ENCODE measurements at regions of chr12 and their contacts with region 1.

Region 1: DNA sequence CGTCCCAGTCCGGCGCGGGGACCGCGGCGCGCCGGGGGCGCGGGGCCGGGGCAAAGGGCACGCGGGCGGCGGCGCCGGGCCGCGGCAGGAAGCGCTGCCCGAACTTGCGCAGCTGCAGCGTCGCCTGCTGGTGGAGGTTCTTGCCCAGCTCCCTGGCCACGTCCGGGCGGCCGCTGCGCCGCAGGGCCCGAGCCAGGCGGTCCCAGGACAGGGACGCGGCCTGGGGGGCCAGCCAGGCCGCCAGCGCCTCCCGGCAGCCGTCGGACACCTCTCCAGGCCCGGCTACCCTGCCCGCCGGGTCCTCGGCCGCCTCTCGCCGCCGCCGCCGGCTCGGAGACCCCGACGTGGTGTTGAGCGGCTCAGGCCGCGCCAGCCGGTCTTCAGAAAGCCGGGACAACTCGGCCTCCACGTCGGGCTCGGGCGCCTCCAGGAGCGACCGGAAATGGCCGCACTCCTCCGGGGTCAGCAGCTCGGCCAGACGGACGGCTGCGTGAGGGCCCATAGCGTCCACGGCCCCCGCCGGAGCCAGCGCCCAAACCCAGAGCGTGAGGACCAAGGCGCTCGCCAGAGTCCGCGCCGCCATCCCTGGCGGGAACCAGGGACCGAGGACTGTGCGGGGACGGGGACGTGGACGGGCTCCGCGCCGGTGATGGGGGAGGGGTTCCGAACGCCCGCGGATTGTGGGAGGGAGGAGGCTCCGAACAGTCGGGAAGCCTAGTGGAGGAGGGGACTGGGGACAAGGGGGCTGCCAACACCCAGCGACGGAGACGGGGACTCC is 34.0 kb downstream of the FIGNL2 start:
- DNase-seq: peak; percentile 85
- ATAC-seq: peak; percentile 90
- H3K4me3 Mint-ChIP-seq: peak overlapping the region; percentile 54
- H3K27ac Mint-ChIP-seq: peak overlapping the region; percentile 70
- H3K4me1 Mint-ChIP-seq: peaks cover 9% of the 10 kb centered on the region
- H3K27me3 Mint-ChIP-seq: no peaks in the 10 kb centered on the region

Region 2: GRCh38 chr12:51590347-51591019 is 224.0 kb before region 1 on chr12:
- CTCF ChIA-PET with region 1: no interaction called
- POLR2A ChIA-PET with region 1: no interaction called
- intact Hi-C with region 1: loop called in 1 of 2 experiments (anchors 1 kb)
- DNase-seq: peak; percentile 88
- ATAC-seq: peak; percentile 89
- H3K4me3 Mint-ChIP-seq: peak overlapping the region; percentile 76
- H3K27ac Mint-ChIP-seq: peak overlapping the region; percentile 63
- H3K4me1 Mint-ChIP-seq: peaks cover 16% of the 10 kb centered on the region
- H3K27me3 Mint-ChIP-seq: peaks cover 47% of the 10 kb centered on the region